ENCODE measurements at regions of chr18 and their contacts with region 1.

Region 1: GRCh38 chr18:33231474-33232317 is 208.8 kb downstream of the CCDC178 start:
- DNase-seq: peak; percentile 37
- CTCF ChIP-seq: peak; percentile 81

Region 2: GRCh38 chr18:33744032-33744955 is 512.6 kb after region 1 on chr18:
- in situ Hi-C with region 1: loop called (anchors 25 kb)
- DNase-seq: no peak
- CTCF ChIP-seq: no peak

Measured in GM13976 (cell line).